GM10248 (cell line): ENCODE measurements at regions of chr1 and their contacts with region 1.

Region 1: DNA sequence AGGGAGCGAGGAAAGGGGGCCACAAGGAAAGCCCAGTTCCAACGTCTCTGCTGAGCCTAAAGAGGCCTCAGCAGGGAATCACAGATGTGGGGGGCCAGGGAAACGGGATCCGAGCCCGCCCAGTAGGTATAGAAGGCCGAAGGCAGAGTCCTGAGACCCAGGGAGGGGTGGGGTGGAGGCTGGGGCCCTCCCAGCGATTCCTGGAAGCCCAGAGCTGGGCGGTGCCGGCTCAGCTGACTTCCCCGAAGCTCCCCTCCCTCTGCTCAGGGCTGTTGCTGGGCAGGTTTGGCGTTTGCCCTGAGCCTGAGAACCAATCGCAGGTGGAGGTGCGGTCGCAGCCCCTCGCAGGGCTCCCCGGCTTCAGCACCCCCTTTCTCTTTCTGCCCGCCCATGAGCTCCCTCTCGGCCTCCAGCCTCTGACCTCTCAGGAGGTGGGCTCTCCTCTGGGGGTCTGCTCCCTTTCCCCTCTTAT is 12.8 kb downstream of the ADAMTSL4 start:
- DNase-seq: peak; percentile 85
- CTCF ChIP-seq: no peak

Region 2: GRCh38 chr1:150537732-150538684 is 24.0 kb before region 1 on chr1:
- CTCF ChIA-PET with region 1: interaction called, 119 read pairs
- POLR2A ChIA-PET with region 1: no interaction called
- DNase-seq: no peak
- CTCF ChIP-seq: no peak

Region 3: DNA sequence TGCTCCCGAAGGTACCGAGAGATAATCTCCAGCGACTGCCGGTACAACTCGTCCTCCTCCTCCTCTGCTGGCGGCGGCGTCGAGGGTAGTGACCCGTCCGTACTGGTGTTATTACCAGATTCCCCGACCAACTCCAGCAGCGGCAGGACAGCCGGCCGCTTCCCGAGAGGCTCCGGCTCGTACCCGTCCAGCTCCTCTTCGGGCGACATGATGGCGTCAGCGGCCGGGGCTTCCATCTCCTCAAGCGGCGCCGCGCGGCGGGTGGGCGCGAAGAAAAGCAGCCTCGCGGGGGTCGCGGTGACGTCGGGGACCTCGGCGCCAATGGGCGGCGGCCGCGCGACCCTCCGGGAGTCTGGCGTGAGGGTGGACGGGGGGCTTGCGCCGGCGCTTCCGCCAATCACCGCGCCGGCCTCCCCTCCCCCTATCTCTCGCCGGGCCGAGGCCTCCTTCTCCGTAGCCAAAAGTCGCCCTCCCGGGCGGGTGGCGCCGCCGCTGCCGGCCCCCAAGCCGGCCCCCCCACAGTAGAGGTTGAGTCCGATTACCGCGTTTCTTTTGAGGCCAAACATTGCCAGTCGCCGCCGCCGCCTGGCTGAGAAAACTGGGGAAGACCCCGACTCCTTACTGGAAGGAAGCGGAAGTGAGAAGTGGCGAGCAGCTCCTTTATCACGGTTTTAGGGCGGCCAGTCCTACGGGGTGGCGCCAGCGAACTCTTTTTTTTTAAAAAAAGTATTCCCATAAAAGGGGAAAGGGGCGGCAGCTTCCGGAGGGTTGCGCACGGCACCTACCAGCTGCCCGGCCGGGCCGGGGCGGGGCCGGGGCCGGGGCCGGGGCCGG is 17.2 kb after region 1 on chr1 and contains the start of gene MCL1:
- CTCF ChIA-PET with region 1: interaction called, 149 read pairs
- POLR2A ChIA-PET with region 1: interaction called, 305 read pairs
- DNase-seq: peak; percentile 94
- CTCF ChIP-seq: no peak

Region 4: GRCh38 chr1:150650199-150650598 is 88.2 kb after region 1 on chr1:
- CTCF ChIA-PET with region 1: interaction called, 11 read pairs
- POLR2A ChIA-PET with region 1: no interaction called
- DNase-seq: no peak
- CTCF ChIP-seq: no peak

Region 5: GRCh38 chr1:150995896-150996295 is 433.9 kb after region 1 on chr1:
- CTCF ChIA-PET with region 1: interaction called, 30 read pairs
- POLR2A ChIA-PET with region 1: interaction called, 4 read pairs
- DNase-seq: no peak
- CTCF ChIP-seq: peak; percentile 73